GM12878 (cell line): ENCODE measurements at regions of chr7 and their contacts with region 1.

Region 1: GRCh38 chr7:50266635-50267386 is 37.7 kb upstream of the IKZF1 start:
- DNase-seq: peak; percentile 84
- ATAC-seq: peak; percentile 56
- H3K4me3 ChIP-seq: peak overlapping the region; percentile 31; the same call in 1 of the 2 replicates
- H3K27ac ChIP-seq: peak overlapping the region; percentile 77
- H3K4me1 ChIP-seq: peaks cover 87% of the 10 kb centered on the region
- H3K27me3 ChIP-seq: no peaks in the 10 kb centered on the region
- CTCF ChIP-seq: no peak
- EP300 ChIP-seq: peak in 1 of 2 experiments; percentile 38; a peak in 1 of 4 replicates
- POLR2A ChIP-seq: peak; percentile 27; the same call in 1 of the 2 replicates
- RAD21 ChIP-seq: no peak

Region 2: GRCh38 chr7:50112250-50112975 is 154.4 kb before region 1 on chr7:
- CTCF ChIA-PET with region 1: no interaction called
- POLR2A ChIA-PET with region 1: no interaction called
- RAD21 ChIA-PET with region 1: no interaction called
- SMC1A ChIA-PET with region 1: no interaction called
- in situ Hi-C with region 1: no loop called
- intact Hi-C with region 1: no loop called
- DNase-seq: no peak
- ATAC-seq: no peak; the same call in 2 of the 3 replicates
- H3K4me3 ChIP-seq: no peak overlapping the region
- H3K27ac ChIP-seq: no peak overlapping the region
- H3K4me1 ChIP-seq: no peaks in the 10 kb centered on the region
- H3K27me3 ChIP-seq: no peaks in the 10 kb centered on the region
- CTCF ChIP-seq: 0 out of 6 replicates have a peak, but pooled peaks of 1 of the 3 experiments have one; percentile 4
- EP300 ChIP-seq: no peak
- POLR2A ChIP-seq: no peak
- RAD21 ChIP-seq: 0 out of 2 replicates have a peak, but pooled peaks have one; percentile 6

Region 3: DNA sequence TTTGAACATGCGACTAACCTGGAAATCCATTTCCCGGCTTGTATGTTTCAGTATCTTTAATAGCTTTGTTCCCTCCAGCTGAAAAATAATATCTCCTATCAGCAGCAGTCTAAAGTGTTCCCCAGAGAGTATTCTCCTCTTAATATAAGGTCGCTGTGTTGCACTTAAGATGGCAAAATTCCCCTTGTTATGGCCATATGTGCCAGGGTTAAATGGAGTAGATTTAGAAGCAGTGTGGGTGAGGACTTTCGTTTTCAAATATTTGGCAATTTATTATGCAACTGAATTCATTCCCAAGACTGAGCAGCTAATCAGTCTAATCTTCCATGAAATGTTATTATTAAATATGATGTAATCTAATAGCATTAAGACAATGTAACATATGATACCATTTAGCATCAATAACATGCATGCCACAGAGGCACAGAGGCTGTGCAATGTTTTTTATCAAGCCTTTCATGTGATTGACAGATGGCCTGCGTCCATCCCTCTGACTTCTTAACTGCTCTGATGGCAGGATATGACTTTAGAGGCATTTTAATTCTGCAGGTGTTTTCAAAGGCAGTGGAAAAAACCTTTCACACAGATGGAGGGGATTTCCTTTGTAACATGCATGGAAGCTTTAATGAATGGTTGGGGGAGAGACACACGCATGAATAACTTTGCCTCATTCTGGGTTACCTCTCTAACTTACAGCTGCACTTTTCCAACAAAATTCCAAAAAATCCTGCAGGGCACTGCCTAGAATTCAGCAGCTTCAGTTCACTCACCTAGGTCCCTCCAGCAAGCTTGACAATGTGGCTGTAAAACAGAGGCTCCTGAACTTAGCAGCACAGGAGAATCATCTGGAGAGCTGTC is 118.6 kb before region 1 on chr7:
- CTCF ChIA-PET with region 1: interaction called, 13 read pairs
- POLR2A ChIA-PET with region 1: interaction called, 8 read pairs
- RAD21 ChIA-PET with region 1: interaction called, 126 read pairs
- SMC1A ChIA-PET with region 1: interaction called, 162 read pairs
- in situ Hi-C with region 1: no loop called
- intact Hi-C with region 1: loop called (anchors 1 kb)
- DNase-seq: peak; percentile 76
- ATAC-seq: peak; percentile 70
- H3K4me3 ChIP-seq: no peak overlapping the region
- H3K27ac ChIP-seq: peak overlapping the region; percentile 59
- H3K4me1 ChIP-seq: peaks cover 46% of the 10 kb centered on the region
- H3K27me3 ChIP-seq: no peaks in the 10 kb centered on the region
- CTCF ChIP-seq: no peak
- EP300 ChIP-seq: peak; percentile 52 to 85; a peak in 3 of 4 replicates
- POLR2A ChIP-seq: no peak
- RAD21 ChIP-seq: no peak

Region 4: GRCh38 chr7:50229964-50230363 is 36.8 kb before region 1 on chr7:
- CTCF ChIA-PET with region 1: interaction called, 9 read pairs
- POLR2A ChIA-PET with region 1: interaction called, 3 read pairs
- RAD21 ChIA-PET with region 1: interaction called, 7 read pairs
- SMC1A ChIA-PET with region 1: interaction called, 22 read pairs
- in situ Hi-C with region 1: no loop called
- intact Hi-C with region 1: no loop called
- DNase-seq: no peak
- ATAC-seq: no peak
- H3K4me3 ChIP-seq: no peak overlapping the region
- H3K27ac ChIP-seq: no peak overlapping the region
- H3K4me1 ChIP-seq: no peaks in the 10 kb centered on the region
- H3K27me3 ChIP-seq: no peaks in the 10 kb centered on the region
- CTCF ChIP-seq: peak; percentile 21 to 58 (median 46); a peak in 5 of 6 replicates
- EP300 ChIP-seq: no peak
- POLR2A ChIP-seq: no peak
- RAD21 ChIP-seq: peak; percentile 58

Region 5: GRCh38 chr7:50281680-50282445 is 15.1 kb after region 1 on chr7:
- CTCF ChIA-PET with region 1: interaction called, 85 read pairs
- POLR2A ChIA-PET with region 1: interaction called, 106 read pairs
- RAD21 ChIA-PET with region 1: interaction called, 142 read pairs
- SMC1A ChIA-PET with region 1: interaction called, 274 read pairs
- in situ Hi-C with region 1: no loop called
- intact Hi-C with region 1: loop called (anchors 1 kb)
- DNase-seq: peak; percentile 81
- ATAC-seq: peak; percentile 88
- H3K4me3 ChIP-seq: peak overlapping the region; percentile 69
- H3K27ac ChIP-seq: peak overlapping the region; percentile 82
- H3K4me1 ChIP-seq: peaks cover 49% of the 10 kb centered on the region
- H3K27me3 ChIP-seq: no peaks in the 10 kb centered on the region
- CTCF ChIP-seq: no peak
- EP300 ChIP-seq: peak; percentile 35 to 72; a peak in 1 of 4 replicates
- POLR2A ChIP-seq: peak; percentile 54; the same call in 1 of the 2 replicates
- RAD21 ChIP-seq: peak; percentile 29; the same call in 1 of the 2 replicates

Region 6: DNA sequence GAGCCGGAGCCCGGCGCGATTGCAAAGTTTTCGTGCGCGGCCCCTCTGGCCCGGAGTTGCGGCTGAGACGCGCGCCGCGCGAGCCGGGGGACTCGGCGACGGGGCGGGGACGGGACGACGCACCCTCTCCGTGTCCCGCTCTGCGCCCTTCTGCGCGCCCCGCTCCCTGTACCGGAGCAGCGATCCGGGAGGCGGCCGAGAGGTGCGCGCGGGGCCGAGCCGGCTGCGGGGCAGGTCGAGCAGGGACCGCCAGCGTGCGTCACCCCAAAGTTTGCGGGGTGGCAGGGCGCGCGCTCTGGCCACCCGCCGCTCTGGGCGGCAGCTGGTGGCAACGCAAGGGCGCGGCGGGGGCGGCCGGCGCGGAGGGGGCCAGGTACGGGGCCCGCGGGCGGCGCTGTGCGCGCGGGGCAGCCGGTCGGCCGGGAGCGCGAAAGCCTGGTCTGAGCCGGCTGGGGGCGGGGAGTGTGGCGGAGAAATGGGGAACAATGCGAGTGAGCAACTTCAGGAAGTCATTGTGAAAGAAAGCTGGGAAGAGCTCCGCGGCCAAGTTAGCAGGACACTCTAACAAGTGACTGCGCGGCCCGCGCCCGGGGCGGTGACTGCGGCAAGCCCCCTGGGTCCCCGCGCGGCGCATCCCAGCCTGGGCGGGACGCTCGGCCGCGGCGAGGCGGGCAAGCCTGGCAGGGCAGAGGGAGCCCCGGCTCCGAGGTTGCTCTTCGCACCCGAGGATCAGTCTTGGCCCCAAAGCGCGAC is 37.5 kb after region 1 on chr7 and contains the start of gene IKZF1:
- CTCF ChIA-PET with region 1: interaction called, 250 read pairs
- POLR2A ChIA-PET with region 1: interaction called, 165 read pairs
- RAD21 ChIA-PET with region 1: interaction called, 293 read pairs
- SMC1A ChIA-PET with region 1: interaction called, 356 read pairs
- in situ Hi-C with region 1: no loop called
- intact Hi-C with region 1: loop called (anchors 1 kb)
- DNase-seq: no peak
- ATAC-seq: peak; percentile 41
- H3K4me3 ChIP-seq: peak within 1 kb of the TSS; percentile 79
- H3K27ac ChIP-seq: peak within 1 kb of the TSS; percentile 67
- H3K4me1 ChIP-seq: peaks cover 10% of the 10 kb centered on the region
- H3K27me3 ChIP-seq: no peaks in the 10 kb centered on the region
- CTCF ChIP-seq: no peak; a peak in 1 of 6 replicates
- EP300 ChIP-seq: no peak
- POLR2A ChIP-seq: peak; percentile 33
- RAD21 ChIP-seq: no peak
- polyA plus RNA-seq, gene IKZF1: 27.2 to 29.8 TPM

Region 7: DNA sequence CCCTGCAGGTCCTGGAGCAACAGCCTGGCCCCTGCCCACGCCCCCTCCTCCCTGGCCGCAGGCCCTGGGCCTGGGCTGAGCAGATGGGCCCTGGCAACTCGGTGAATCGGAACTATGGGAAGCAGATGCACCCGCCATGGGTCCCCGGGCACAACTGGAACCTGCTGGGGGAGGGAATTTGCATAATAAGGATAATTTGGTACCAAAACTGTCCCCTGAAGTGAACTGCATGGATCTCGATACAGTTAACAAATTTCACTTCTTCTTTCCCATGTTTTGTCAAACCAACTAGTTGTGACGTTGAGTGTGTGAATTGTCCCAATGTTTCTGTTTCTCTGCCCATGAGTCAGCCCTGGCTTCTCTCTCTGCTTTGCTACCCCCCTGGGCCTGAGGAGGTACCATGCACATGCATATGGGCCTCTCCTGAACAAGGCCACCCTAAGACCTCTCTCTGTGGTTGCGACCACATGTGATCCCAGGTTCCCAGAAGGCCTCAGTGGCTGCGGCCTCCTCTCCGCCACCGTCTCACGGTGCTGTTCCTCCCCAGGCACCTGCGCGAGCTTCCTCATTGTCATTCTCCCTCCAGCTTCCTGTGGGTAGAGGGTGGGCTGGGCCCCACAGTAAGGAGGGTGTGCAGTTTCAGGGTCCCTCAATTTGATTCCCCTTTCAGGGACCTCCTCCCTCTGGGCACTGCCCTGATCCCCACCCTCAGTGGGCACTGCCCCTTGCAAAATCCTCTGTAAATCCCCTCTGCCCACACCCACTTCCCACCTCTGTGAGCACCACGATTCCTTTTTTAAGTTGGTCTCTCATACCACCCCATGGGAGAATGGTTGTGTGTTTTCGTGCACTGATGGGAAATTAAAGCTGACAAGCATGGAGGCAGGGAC is 143.3 kb after region 1 on chr7:
- CTCF ChIA-PET with region 1: no interaction called
- POLR2A ChIA-PET with region 1: no interaction called
- RAD21 ChIA-PET with region 1: no interaction called
- SMC1A ChIA-PET with region 1: interaction called, 23 read pairs
- in situ Hi-C with region 1: no loop called
- intact Hi-C with region 1: loop called (anchors 2 kb)
- DNase-seq: peak; percentile 94
- ATAC-seq: peak; percentile 72
- H3K4me3 ChIP-seq: no peak overlapping the region
- H3K27ac ChIP-seq: peak overlapping the region; percentile 54
- H3K4me1 ChIP-seq: peaks cover 71% of the 10 kb centered on the region
- H3K27me3 ChIP-seq: no peaks in the 10 kb centered on the region
- CTCF ChIP-seq: no peak
- EP300 ChIP-seq: peak; percentile 32 to 54; a peak in 1 of 4 replicates
- POLR2A ChIP-seq: peak; percentile 49; the same call in 1 of the 2 replicates
- RAD21 ChIP-seq: no peak